ENCODE measurements at regions of chr15 and their contacts with region 1.

Region 1: DNA sequence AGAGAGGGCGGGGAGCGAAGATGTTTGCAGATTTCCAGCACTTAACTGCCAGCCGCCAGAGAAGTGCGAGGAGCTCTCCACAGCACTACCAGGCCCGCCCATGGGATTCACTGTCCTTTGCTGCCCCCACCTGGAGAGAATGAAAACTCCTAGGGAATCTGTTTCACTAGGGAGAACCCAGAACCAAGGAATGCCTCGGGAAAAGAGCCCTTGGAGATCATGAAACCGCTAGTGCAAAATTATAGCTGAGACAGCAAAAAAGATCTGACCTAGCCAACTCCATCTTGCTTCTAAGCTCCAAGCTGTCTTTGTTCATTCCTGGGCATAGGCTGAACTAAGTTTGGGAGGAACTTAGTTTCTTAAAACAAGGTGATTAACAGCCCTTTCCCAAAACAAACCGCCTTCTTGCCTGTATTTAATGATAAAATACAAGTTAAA is 82.6 kb upstream of the GCNT3 start:
- DNase-seq: peak; percentile 74
- H3K4me3 Mint-ChIP-seq: no peak overlapping the region
- H3K27ac Mint-ChIP-seq: no peak overlapping the region
- H3K4me1 Mint-ChIP-seq: peaks cover 14% of the 10 kb centered on the region
- H3K27me3 Mint-ChIP-seq: peaks cover 25% of the 10 kb centered on the region

Region 2: DNA sequence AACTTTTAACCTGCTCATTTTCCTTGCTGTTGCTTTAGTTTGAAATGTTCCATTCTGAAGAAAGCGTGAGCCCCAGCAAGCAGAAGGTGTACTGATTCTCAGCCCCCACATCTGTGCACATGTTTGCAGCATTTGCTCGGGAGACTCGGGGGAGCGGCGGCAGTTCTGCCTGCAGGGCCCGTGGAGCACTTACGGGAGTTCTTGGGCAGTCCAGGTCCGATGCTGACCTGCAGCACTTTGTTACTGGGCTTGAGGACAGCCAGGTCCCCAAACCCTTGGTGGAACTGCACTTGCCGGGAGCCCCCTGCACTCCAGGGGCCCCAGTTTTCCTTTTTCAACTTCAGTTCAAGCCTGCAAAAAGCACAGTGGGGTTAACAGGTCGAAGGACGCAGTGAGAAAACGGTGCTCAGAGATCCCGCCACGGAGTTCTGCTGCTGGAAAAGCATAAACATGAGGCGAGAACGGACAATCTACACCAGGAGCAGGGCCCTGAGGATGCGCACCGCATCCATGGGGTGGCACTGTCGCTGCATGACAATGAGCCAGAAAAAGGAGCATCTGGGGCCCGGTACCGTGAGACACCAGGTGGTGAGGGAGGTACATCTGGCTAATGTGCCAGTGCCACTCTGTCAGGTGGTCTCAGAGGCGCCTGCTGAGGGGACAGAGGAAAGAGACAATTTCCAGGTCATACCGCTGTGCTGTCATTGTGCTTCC is 367.9 kb before region 1 on chr15:
- CTCF ChIA-PET with region 1: interaction called, 13 read pairs
- POLR2A ChIA-PET with region 1: no interaction called
- DNase-seq: peak; percentile 42
- H3K4me3 Mint-ChIP-seq: no peak overlapping the region
- H3K27ac Mint-ChIP-seq: no peak overlapping the region
- H3K4me1 Mint-ChIP-seq: peaks cover 11% of the 10 kb centered on the region
- H3K27me3 Mint-ChIP-seq: no peaks in the 10 kb centered on the region

Region 3: GRCh38 chr15:59247364-59247763 is 281.6 kb before region 1 on chr15:
- CTCF ChIA-PET with region 1: interaction called, 10 read pairs
- POLR2A ChIA-PET with region 1: no interaction called
- DNase-seq: peak; percentile 73
- H3K4me3 Mint-ChIP-seq: no peak overlapping the region
- H3K27ac Mint-ChIP-seq: peak overlapping the region; percentile 29
- H3K4me1 Mint-ChIP-seq: peaks cover 38% of the 10 kb centered on the region
- H3K27me3 Mint-ChIP-seq: peaks cover 4% of the 10 kb centered on the region

Region 4: DNA sequence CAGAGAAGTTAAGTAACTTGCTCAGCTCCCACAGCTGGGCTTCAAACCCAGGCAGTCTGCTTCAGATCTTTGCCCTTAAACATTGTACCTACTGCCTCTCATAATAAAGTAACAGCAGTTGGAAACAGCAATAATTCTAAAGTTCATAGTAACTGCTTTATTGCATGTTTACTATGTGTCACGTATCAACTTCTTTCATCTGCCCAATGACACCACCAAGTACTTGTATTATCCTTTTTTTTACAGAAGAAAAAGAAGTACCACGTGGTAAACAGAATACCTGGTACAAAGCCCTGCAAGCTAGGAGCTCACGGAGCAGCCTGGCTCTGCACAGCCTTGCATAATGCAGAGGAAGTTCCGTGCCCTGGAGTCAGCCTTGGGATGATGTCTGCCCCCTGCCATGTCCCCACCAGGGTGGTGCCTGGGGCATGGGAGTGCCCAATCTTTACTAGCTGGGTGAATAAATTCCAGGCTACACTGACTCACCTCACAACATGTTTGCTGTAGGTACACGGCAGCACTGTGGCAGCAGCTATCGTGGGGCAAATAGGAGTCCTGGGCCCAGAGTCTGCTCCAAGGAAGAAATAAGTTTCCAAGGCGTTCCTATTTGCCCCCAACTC is 245.2 kb before region 1 on chr15:
- CTCF ChIA-PET with region 1: no interaction called
- POLR2A ChIA-PET with region 1: no interaction called
- DNase-seq: no peak
- H3K4me3 Mint-ChIP-seq: no peak overlapping the region
- H3K27ac Mint-ChIP-seq: no peak overlapping the region
- H3K4me1 Mint-ChIP-seq: peaks cover 12% of the 10 kb centered on the region
- H3K27me3 Mint-ChIP-seq: peaks cover 26% of the 10 kb centered on the region

Region 5: DNA sequence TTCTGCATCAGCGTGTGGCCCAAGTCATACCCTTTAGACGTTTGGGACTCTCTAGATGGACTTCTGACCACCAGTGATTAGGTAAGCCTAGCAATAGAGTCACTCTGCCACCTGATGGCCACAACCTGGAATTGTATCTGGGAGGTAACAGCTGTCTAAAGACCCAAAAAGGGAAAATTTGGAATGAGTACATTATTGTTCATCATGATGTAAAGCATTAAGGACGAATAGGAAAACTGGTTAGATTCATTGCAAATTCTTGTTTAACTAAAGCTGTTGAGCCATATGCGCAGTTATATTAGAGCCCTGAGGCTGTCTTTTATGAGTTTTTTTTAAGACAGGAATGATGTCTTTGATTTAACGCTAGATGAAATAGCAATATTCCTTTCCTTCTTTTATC is 27.4 kb before region 1 on chr15:
- CTCF ChIA-PET with region 1: interaction called, 19 read pairs
- POLR2A ChIA-PET with region 1: no interaction called
- DNase-seq: no peak
- H3K4me3 Mint-ChIP-seq: no peak overlapping the region
- H3K27ac Mint-ChIP-seq: no peak overlapping the region
- H3K4me1 Mint-ChIP-seq: no peaks in the 10 kb centered on the region
- H3K27me3 Mint-ChIP-seq: peaks cover 7% of the 10 kb centered on the region

Region 6: DNA sequence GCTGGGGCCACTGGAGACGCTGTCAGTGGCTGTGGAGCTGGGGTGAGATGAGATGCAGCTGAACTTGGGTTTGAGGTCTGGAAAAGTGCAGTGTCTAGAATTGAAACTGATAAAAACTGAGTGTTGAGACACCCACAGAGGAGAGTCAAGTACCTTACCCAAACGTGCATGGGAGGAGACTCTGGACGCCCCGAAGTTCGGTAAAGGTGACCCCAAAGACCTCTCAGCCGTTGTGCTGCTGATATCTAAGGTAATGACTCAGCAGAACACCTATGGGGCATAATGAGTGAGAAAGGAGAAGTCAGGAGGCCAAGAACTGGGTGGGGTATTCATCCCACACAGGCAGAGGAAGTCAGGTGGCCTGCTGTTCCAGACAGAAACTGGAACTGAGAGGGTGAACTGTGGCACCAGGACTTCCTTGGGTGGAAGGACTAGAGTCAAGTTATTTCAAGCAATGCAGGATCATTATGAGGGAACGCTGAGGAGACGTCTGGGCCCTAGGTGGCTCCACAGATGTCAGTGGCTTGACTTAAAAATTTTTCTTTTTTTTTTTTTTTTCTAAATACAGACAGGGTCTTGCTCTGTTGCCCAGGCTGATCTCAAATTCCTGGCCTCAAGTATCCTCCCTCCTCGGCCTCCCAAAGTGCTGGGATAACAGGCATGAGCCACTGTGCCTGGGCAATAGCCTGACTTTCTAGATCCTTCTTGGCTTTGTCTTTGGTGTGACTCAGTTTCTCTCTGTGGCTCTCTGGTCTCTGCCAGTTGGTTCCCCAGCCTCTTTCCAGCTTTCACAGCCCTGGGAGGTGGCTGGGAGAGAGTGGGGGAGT is 14.9 kb after region 1 on chr15:
- CTCF ChIA-PET with region 1: interaction called, 11 read pairs
- POLR2A ChIA-PET with region 1: no interaction called
- DNase-seq: no peak
- H3K4me3 Mint-ChIP-seq: peak overlapping the region; percentile 39
- H3K27ac Mint-ChIP-seq: peak overlapping the region; percentile 62
- H3K4me1 Mint-ChIP-seq: peaks cover 20% of the 10 kb centered on the region
- H3K27me3 Mint-ChIP-seq: peaks cover 11% of the 10 kb centered on the region

Region 7: DNA sequence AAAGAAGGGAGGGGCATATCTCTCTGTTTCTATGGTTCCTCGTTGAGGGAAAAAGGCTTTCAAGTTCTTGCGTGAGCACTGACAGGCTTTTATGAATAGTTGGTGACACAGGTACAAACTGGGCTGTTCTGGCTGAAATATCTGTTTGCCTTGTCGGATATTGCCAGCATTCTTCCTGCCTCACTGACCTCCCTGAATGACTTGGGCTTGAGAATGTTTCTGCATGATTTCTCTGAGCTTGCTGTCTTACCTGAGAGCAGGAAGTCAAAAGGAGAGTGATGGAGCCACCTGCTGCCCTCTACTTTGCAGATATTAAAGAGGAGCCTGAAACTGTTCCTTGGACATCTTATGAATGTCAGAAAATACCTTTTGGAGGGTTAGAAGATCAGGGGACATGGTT is 87.4 kb after region 1 on chr15:
- CTCF ChIA-PET with region 1: interaction called, 23 read pairs
- POLR2A ChIA-PET with region 1: no interaction called
- DNase-seq: no peak
- H3K4me3 Mint-ChIP-seq: no peak overlapping the region
- H3K27ac Mint-ChIP-seq: no peak overlapping the region
- H3K4me1 Mint-ChIP-seq: peaks cover 6% of the 10 kb centered on the region
- H3K27me3 Mint-ChIP-seq: peaks cover 34% of the 10 kb centered on the region

Region 8: GRCh38 chr15:59632714-59633113 is 103.7 kb after region 1 on chr15:
- CTCF ChIA-PET with region 1: interaction called, 10 read pairs
- POLR2A ChIA-PET with region 1: interaction called, 3 read pairs
- DNase-seq: no peak
- H3K4me3 Mint-ChIP-seq: no peak overlapping the region
- H3K27ac Mint-ChIP-seq: no peak overlapping the region
- H3K4me1 Mint-ChIP-seq: no peaks in the 10 kb centered on the region
- H3K27me3 Mint-ChIP-seq: peaks cover 21% of the 10 kb centered on the region